ENCODE measurements at regions of chr14 and their contacts with region 1.

Region 1: GRCh38 chr14:101707068-101707842 is 54.3 kb upstream of the PPP2R5C start:
- DNase-seq: peak in 7 of 9 experiments; percentile 53 to 93 (median 74)
- ATAC-seq: peak; percentile 69
- H3K4me3 ChIP-seq: no peak overlapping the region
- H3K4me3 Mint-ChIP-seq: peak overlapping the region; percentile 12
- H3K27ac ChIP-seq: peak overlapping the region; percentile 11 to 78
- H3K27ac Mint-ChIP-seq: peak overlapping the region; percentile 83
- H3K4me1 ChIP-seq: peaks cover 34% of the 10 kb centered on the region
- H3K4me1 Mint-ChIP-seq: peaks cover 31% of the 10 kb centered on the region
- H3K27me3 ChIP-seq: no peaks in the 10 kb centered on the region
- H3K27me3 Mint-ChIP-seq: no peaks in the 10 kb centered on the region
- CTCF ChIP-seq: peak; percentile 72

Region 2: GRCh38 chr14:101737414-101738339 is 30.4 kb after region 1 on chr14:
- CTCF ChIA-PET with region 1: interaction called, 16 read pairs
- POLR2A ChIA-PET with region 1: interaction called, 3 read pairs
- intact Hi-C with region 1: no loop called
- DNase-seq: peak in 5 of 9 experiments; percentile 31 to 72 (median 40)
- ATAC-seq: peak; percentile 71
- H3K4me3 ChIP-seq: no peak overlapping the region
- H3K4me3 Mint-ChIP-seq: no peak overlapping the region
- H3K27ac ChIP-seq: no peak overlapping the region
- H3K27ac Mint-ChIP-seq: peak overlapping the region; percentile 57
- H3K4me1 ChIP-seq: no peaks in the 10 kb centered on the region
- H3K4me1 Mint-ChIP-seq: peaks cover 14% of the 10 kb centered on the region
- H3K27me3 ChIP-seq: no peaks in the 10 kb centered on the region
- H3K27me3 Mint-ChIP-seq: no peaks in the 10 kb centered on the region
- CTCF ChIP-seq: peak; percentile 24

Region 3: GRCh38 chr14:101809671-101810514 is 102.6 kb after region 1 on chr14:
- CTCF ChIA-PET with region 1: interaction called, 8 read pairs
- POLR2A ChIA-PET with region 1: interaction called, 9 read pairs
- intact Hi-C with region 1: loop called in 1 of 2 experiments (anchors 1 kb)
- DNase-seq: peak; percentile 67 to 97 (median 83)
- ATAC-seq: peak; percentile 86
- H3K4me3 ChIP-seq: peak overlapping the region; percentile 78 to 80
- H3K4me3 Mint-ChIP-seq: peak overlapping the region; percentile 94
- H3K27ac ChIP-seq: peak overlapping the region; percentile 97 to 99
- H3K27ac Mint-ChIP-seq: peak overlapping the region; percentile 99
- H3K4me1 ChIP-seq: peaks cover 42% of the 10 kb centered on the region
- H3K4me1 Mint-ChIP-seq: peaks cover 52% of the 10 kb centered on the region
- H3K27me3 ChIP-seq: no peaks in the 10 kb centered on the region
- H3K27me3 Mint-ChIP-seq: no peaks in the 10 kb centered on the region
- CTCF ChIP-seq: no peak

Region 4: GRCh38 chr14:101876555-101876938 is 169.3 kb after region 1 on chr14:
- CTCF ChIA-PET with region 1: interaction called, 5 read pairs
- POLR2A ChIA-PET with region 1: no interaction called
- intact Hi-C with region 1: loop called (anchors 2 to 5 kb)
- DNase-seq: peak; percentile 38 to 93 (median 65)
- ATAC-seq: peak; percentile 85
- H3K4me3 ChIP-seq: peak overlapping the region; percentile 13 to 23
- H3K4me3 Mint-ChIP-seq: peak overlapping the region; percentile 78
- H3K27ac ChIP-seq: peak overlapping the region; percentile 45 to 86
- H3K27ac Mint-ChIP-seq: peak overlapping the region; percentile 97
- H3K4me1 ChIP-seq: peaks cover 58% of the 10 kb centered on the region
- H3K4me1 Mint-ChIP-seq: peaks cover 81% of the 10 kb centered on the region
- H3K27me3 ChIP-seq: no peaks in the 10 kb centered on the region
- H3K27me3 Mint-ChIP-seq: no peaks in the 10 kb centered on the region
- CTCF ChIP-seq: no peak

Region 5: DNA sequence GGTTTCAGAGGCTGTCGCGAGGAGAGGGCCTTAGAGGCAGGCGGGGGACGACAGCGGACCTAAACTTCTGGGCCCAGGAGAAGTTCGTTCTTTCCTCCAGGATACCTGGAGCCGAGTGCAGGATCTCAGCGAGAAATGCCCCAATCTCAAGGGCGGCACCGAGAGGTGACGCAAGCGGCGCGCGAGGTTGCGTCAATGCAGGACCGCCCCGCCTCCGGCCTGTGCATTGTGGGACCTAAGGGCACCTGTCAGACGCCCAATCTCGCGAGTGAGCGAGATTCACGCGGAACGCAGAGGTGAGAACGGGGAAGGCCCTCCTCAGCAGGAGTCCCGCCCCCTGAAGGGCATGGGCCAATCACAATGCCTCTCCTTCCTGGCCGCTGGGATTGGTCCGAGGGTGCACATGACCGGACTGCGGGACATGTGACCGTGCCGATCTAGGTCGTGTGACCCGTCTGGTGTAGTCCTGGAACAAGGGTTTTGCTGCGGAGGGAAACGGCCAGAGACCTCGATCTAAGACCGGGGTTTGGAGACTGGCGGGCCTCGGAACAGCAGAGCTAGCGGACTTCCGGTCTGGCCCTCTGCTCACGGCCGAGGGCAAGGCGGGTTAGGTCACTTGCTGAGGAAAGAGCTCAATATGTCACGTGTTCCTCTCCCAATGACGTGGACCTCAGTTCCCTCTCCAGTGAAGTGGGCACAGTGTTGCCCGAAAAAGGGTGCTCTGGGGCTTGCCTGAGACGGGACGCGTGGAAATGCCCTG is 240.8 kb after region 1 on chr14:
- CTCF ChIA-PET with region 1: interaction called, 9 read pairs
- POLR2A ChIA-PET with region 1: interaction called, 12 read pairs
- intact Hi-C with region 1: loop called (anchors 1 kb)
- DNase-seq: peak; percentile 98 to 100 (median 99)
- ATAC-seq: peak; percentile 95
- H3K4me3 ChIP-seq: peak overlapping the region; percentile 81 to 82
- H3K4me3 Mint-ChIP-seq: peak overlapping the region; percentile 93
- H3K27ac ChIP-seq: peak overlapping the region; percentile 95 to 100
- H3K27ac Mint-ChIP-seq: peak overlapping the region; percentile 99
- H3K4me1 ChIP-seq: peaks cover 14% of the 10 kb centered on the region
- H3K4me1 Mint-ChIP-seq: peaks cover 20% of the 10 kb centered on the region
- H3K27me3 ChIP-seq: peaks cover 0 to 6% of the 10 kb centered on the region in 2 experiments
- H3K27me3 Mint-ChIP-seq: peaks cover 23% of the 10 kb centered on the region
- CTCF ChIP-seq: no peak

Region 6: DNA sequence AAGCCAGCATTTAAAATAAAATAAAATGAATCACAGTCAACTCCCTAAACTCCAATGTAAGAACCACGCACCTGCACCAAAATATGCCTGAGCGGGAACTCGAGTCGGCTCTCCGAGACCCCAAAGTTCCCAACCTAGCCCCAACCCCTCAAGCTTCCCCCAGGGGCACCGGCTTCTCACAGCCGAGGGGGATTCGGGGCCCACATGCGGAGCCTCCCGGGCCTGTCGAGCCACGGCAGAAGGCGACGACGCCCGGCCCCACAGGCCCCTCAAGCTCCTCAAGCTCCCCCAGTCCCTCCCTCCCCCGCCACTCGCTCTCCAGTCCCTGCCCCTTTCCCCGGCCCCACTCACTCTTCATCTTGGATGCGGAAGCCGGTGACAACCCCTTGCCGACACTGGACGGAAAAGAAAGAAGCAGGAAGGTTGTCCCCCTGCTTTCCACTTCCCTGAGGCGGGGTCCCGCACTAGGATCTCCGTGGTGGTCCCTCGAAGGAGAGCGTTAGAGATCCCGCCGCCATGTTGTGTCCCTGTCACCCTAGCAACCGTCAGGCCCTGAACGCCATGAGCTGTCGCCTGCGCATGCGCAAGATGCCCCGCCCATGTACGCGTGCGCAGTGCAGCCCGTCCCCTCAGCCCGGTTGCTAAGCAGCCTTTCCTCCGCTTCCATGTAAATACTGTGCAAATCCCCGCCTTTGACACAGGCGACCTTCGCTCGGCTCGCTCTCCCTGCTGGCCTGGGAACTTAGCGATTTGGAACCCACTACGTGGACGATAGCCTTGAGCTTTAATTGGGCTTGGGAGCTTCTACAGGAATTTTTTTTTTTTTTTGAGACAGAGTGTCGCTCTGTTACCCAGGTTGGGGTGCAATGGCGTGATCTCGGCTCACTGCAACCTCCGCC is 597.6 kb after region 1 on chr14 and contains the start of gene MOK:
- CTCF ChIA-PET with region 1: no interaction called
- POLR2A ChIA-PET with region 1: no interaction called
- intact Hi-C with region 1: loop called (anchors 5 to 10 kb)
- DNase-seq: peak; percentile 94 to 99 (median 98)
- ATAC-seq: peak; percentile 92
- H3K4me3 ChIP-seq: peak within 1 kb of the TSS; percentile 83 to 97
- H3K4me3 Mint-ChIP-seq: peak within 1 kb of the TSS; percentile 91
- H3K27ac ChIP-seq: peak within 1 kb of the TSS; percentile 84 to 88
- H3K27ac Mint-ChIP-seq: peak within 1 kb of the TSS; percentile 94
- H3K4me1 ChIP-seq: peaks cover 5% of the 10 kb centered on the region
- H3K4me1 Mint-ChIP-seq: peaks cover 10% of the 10 kb centered on the region
- H3K27me3 ChIP-seq: no peaks in the 10 kb centered on the region
- H3K27me3 Mint-ChIP-seq: peaks cover 2% of the 10 kb centered on the region
- CTCF ChIP-seq: no peak
- total RNA-seq, gene MOK: 2.7 to 3.6 TPM